ENCODE measurements at regions of chr1 and their contacts with region 1.

Region 1: GRCh38 chr1:159612211-159612885 is 24.7 kb downstream of the APCS start:
- DNase-seq: no peak
- H3K4me3 ChIP-seq: no peak overlapping the region
- CTCF ChIP-seq: no peak
- POLR2A ChIP-seq: no peak

Region 2: GRCh38 chr1:157925419-157926166 is 1686.8 kb before region 1 on chr1:
- intact Hi-C with region 1: loop called (anchors 10 kb)
- DNase-seq: no peak
- H3K4me3 ChIP-seq: no peak overlapping the region
- CTCF ChIP-seq: no peak
- POLR2A ChIP-seq: no peak